Prostate gland (tissue), 2 donors: ENCODE measurements at regions of chr2 and their contacts with region 1.

Region 1: DNA sequence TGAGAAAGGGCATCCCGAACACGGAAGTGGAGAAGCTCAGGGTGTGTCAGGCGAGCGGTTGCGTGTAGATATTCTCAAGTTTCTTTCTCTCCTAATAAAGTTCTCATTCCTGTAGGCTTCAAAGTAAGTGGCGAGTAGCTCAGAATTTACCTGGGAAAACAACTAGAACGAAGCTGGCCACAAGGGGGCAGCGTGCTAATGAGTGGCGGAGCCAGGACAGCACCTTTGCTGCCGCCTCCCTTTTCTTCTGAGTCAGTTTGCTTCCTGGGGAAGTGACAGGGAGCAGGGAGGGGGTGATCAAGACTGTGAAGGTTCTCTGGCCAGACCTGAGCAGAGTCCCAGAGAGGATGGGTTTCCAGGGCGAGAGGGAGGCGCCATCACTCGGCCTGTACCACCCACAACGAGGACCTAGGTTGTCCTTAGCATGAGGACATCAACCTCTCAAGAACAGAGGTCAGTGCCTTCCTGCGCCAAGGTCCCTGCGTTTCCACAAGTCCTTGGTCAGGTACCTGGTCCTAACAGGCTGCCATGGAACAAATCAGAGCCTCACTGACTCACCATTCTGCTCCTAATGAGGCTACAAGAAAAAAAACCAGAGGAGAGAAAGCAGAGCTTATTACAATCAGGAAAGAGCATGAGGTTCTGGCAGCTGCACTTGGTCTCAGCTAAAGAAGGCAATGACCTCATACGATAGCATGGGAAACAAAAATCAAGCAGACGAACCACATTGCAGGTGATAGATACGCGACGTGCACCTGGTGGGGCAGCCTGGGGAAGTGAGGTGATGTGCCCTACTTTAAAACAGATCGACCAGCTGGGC is 98.6 kb downstream of the PLB1 start:
- DNase-seq: peak; percentile 95
- H3K4me3 ChIP-seq: no peak overlapping the region
- H3K27ac ChIP-seq: peak overlapping the region; percentile 80 to 89
- H3K4me1 ChIP-seq: peaks cover 2% of the 10 kb centered on the region
- H3K27me3 ChIP-seq: no peaks in the 10 kb centered on the region
- CTCF ChIP-seq: peak; percentile 92 to 96 (median 94)
- POLR2A ChIP-seq: no peak

Region 2: GRCh38 chr2:28810384-28811285 is 216.1 kb after region 1 on chr2 and contains the start of gene SPDYA:
- intact Hi-C with region 1: loop called (anchors 5 kb)
- DNase-seq: peak; percentile 61
- H3K4me3 ChIP-seq: peak within 1 kb of the TSS; percentile 30 to 36
- H3K27ac ChIP-seq: peak within 1 kb of the TSS; percentile 32 to 37
- H3K4me1 ChIP-seq: no peaks in the 10 kb centered on the region
- H3K27me3 ChIP-seq: no peaks in the 10 kb centered on the region
- CTCF ChIP-seq: peak in 1 of 4 experiments; percentile 10
- POLR2A ChIP-seq: no peak
- total RNA-seq, gene SPDYA: 0.73 to 7.3 TPM

Region 3: GRCh38 chr2:28894470-28895177 is 300.1 kb after region 1 on chr2 and contains the start of gene WDR43:
- intact Hi-C with region 1: no loop called
- DNase-seq: peak; percentile 96
- H3K4me3 ChIP-seq: peak within 1 kb of the TSS; percentile 89 to 98
- H3K27ac ChIP-seq: peak within 1 kb of the TSS; percentile 55 to 56
- H3K4me1 ChIP-seq: peaks cover 8% of the 10 kb centered on the region
- H3K27me3 ChIP-seq: no peaks in the 10 kb centered on the region
- CTCF ChIP-seq: peak in 2 of 4 experiments; percentile 25 to 26
- POLR2A ChIP-seq: peak; percentile 67
- total RNA-seq, gene WDR43: 30.6 to 36.9 TPM

Region 4: GRCh38 chr2:28958689-28959088 is 364.2 kb after region 1 on chr2:
- intact Hi-C with region 1: no loop called
- DNase-seq: peak; percentile 62
- H3K4me3 ChIP-seq: no peak overlapping the region
- H3K27ac ChIP-seq: no peak overlapping the region
- H3K4me1 ChIP-seq: no peaks in the 10 kb centered on the region
- H3K27me3 ChIP-seq: no peaks in the 10 kb centered on the region
- CTCF ChIP-seq: peak; percentile 11 to 82 (median 64)
- POLR2A ChIP-seq: no peak

Region 5: GRCh38 chr2:29627279-29627711 is 1032.8 kb after region 1 on chr2:
- intact Hi-C with region 1: no loop called
- DNase-seq: no peak
- H3K4me3 ChIP-seq: no peak overlapping the region
- H3K27ac ChIP-seq: no peak overlapping the region
- H3K4me1 ChIP-seq: no peaks in the 10 kb centered on the region
- H3K27me3 ChIP-seq: peaks cover 9% of the 10 kb centered on the region
- CTCF ChIP-seq: no peak
- POLR2A ChIP-seq: no peak